ENCODE measurements at regions of chr22 and their contacts with region 1.

Region 1: GRCh38 chr22:41589391-41590241 is at the start of gene PMM1:
- DNase-seq: peak; percentile 100
- H3K4me3 ChIP-seq: peak within 1 kb of the TSS; percentile 79 to 100
- H3K27ac ChIP-seq: peak within 1 kb of the TSS; percentile 62 to 90
- H3K4me1 ChIP-seq: peaks cover 0 to 9% of the 10 kb centered on the region in 2 donors
- H3K27me3 ChIP-seq: no peaks in the 10 kb centered on the region
- CTCF ChIP-seq: no peak
- total RNA-seq, gene PMM1: 12.5 TPM

Region 2: DNA sequence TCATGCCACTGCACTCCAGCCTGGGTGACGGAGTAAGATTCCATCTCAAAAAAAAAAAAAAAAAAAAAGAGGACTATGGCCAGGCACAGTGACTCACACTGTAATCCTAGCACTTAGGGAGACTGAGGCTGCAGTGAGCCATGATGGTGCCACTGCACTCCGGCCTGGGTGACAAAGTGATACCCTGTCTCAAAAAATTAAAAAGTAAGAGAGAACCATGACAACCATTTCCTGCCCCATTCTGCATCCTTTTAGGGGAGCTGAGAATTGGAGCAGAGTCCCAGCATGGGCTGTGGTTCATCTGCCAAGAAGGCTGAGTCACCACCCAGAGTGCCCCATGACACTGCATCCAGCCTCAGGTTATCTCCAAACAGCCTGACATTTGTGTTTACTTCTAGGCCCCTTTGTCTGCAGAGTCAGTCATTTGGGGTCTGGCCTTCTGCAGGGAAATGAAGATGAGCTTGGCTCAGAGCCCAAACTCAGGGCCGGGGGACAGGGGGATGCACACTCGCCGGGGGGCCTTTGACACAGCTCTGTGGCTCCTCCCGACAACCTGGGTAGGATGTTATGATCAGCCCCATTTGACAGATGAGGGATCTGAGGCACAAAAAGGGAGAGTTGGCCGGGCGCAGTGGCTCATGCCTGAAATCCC is 24.1 kb before region 1 on chr22:
- intact Hi-C with region 1: loop called (anchors 1 kb)
- DNase-seq: peak in 1 of 2 donors; percentile 85
- H3K4me3 ChIP-seq: no peak overlapping the region
- H3K27ac ChIP-seq: peak overlapping the region; percentile 91 to 93
- H3K4me1 ChIP-seq: peaks cover 22 to 57% of the 10 kb centered on the region in 2 donors
- H3K27me3 ChIP-seq: no peaks in the 10 kb centered on the region
- CTCF ChIP-seq: no peak

Region 3: DNA sequence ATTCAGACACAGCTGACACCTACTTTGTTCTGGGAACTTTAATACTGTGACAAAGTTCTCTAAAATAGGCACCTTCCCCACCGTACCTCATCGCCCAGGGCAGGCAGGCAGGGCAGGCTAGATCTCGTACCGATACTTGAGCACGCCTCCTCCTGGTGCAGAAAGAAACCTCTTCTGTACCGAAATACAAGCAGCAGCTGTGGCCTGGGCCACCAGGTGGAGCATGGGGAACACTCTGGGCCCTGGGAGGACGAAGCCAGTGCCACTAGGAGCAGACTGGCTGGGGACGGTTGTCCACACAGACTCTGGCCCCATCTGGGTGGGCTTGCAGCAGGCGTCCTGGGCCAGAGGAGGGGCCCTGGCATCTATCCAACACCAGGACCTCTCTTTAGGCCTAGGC is 12.7 kb before region 1 on chr22:
- intact Hi-C with region 1: no loop called
- DNase-seq: peak in 1 of 2 donors; percentile 84
- H3K4me3 ChIP-seq: no peak overlapping the region
- H3K27ac ChIP-seq: peak overlapping the region; percentile 6 to 35
- H3K4me1 ChIP-seq: no peaks in the 10 kb centered on the region
- H3K27me3 ChIP-seq: no peaks in the 10 kb centered on the region
- CTCF ChIP-seq: peak; percentile 70 to 78 (median 77)

Region 4: GRCh38 chr22:41621099-41621910 is 31.7 kb after region 1 on chr22 and contains the start of gene XRCC6:
- intact Hi-C with region 1: loop called (anchors 1 kb)
- DNase-seq: peak; percentile 100
- H3K4me3 ChIP-seq: peak within 1 kb of the TSS; percentile 86 to 91
- H3K27ac ChIP-seq: peak within 1 kb of the TSS; percentile 95 to 96
- H3K4me1 ChIP-seq: peaks cover 4 to 20% of the 10 kb centered on the region in 2 donors
- H3K27me3 ChIP-seq: no peaks in the 10 kb centered on the region
- CTCF ChIP-seq: no peak
- total RNA-seq, gene XRCC6: 89.7 TPM

Region 5: GRCh38 chr22:41832553-41833368 is 243.1 kb after region 1 on chr22 and contains the start of gene SREBF2:
- intact Hi-C with region 1: no loop called
- DNase-seq: peak; percentile 99 to 100
- H3K4me3 ChIP-seq: peak within 1 kb of the TSS; percentile 90 to 97
- H3K27ac ChIP-seq: peak within 1 kb of the TSS; percentile 92
- H3K4me1 ChIP-seq: peaks cover 0 to 5% of the 10 kb centered on the region in 2 donors
- H3K27me3 ChIP-seq: no peaks in the 10 kb centered on the region
- CTCF ChIP-seq: peak in 1 of 3 experiments; percentile 8
- total RNA-seq, gene SREBF2: 46.1 TPM

Region 6: DNA sequence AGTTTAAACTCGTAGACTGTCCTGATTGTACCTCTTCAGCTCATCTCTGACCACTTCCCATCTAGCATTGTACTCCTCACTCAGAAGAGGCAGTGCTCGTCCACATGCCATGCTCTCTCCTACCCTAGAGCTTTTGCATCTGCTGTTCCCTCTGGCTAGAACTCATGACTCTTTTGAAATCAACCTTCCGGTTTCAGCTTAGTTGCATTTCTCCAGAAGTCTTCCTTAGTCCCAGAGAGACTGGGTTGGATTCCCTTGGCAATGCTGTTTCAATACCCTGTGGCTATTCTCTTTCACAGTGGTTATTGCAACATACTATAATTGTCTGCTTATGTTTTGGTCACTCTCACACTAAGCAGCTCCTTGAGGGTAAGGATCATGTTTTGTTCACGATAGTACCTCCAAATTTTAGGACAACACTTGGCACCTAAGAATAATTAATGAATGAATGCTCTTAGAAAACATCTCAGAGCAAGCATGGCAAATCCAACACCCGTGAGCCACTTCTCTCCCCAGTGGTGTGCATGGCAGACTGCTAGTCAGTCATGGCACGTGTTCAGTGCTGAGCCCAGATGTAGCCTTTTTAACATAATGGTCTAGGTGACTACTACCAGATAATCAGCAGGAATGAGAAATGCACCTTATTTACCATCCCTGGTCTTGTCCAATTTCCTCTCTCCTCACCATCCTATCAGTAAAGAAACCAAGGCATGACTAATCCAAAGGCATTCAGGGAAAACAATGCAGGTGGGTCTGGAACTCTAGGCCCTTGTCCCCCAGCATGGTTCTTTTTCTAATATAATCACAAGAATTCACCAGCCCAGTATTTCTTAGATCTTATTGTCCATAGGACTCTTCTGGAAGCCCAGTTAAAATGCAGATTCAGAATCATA is 394.1 kb after region 1 on chr22:
- intact Hi-C with region 1: no loop called
- DNase-seq: no peak
- H3K4me3 ChIP-seq: no peak overlapping the region
- H3K27ac ChIP-seq: no peak overlapping the region
- H3K4me1 ChIP-seq: no peaks in the 10 kb centered on the region
- H3K27me3 ChIP-seq: no peaks in the 10 kb centered on the region
- CTCF ChIP-seq: no peak

Measured in ascending aorta (tissue), 2 donors.